T-cell (primary cell): ENCODE measurements at regions of chr4 and their contacts with region 1.

Region 1: DNA sequence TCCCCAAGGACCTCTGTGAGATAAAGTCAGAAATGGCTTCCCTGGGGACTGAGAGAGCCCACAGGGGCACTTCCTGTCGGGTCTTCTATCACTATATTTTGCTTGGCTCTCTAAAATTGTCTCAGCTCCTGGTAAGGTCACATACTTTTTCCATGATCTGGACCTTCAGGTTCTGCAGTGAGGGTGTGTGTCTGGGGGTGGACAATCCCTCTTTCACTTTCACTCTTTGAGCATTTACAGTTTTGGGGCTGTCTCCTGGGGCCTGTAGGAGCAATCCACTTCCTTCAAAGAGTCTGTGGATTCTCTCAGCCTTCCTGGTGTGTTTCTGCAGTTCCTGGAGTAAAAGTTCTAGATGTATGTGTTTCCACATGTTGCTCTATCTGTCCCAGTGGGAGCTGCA is 335.7 kb downstream of the FSTL5 start:
- DNase-seq: no peak
- ATAC-seq: no peak
- H3K4me3 ChIP-seq: no peak overlapping the region
- H3K4me3 Mint-ChIP-seq: no peak overlapping the region
- H3K27ac ChIP-seq: no peak overlapping the region
- H3K27ac Mint-ChIP-seq: no peak overlapping the region
- H3K4me1 ChIP-seq: no peaks in the 10 kb centered on the region
- H3K4me1 Mint-ChIP-seq: no peaks in the 10 kb centered on the region
- H3K27me3 ChIP-seq: no peaks in the 10 kb centered on the region
- H3K27me3 Mint-ChIP-seq: no peaks in the 10 kb centered on the region

Region 2: GRCh38 chr4:160403081-160403480 is 1425.0 kb before region 1 on chr4:
- CTCF ChIA-PET with region 1: no interaction called
- POLR2A ChIA-PET with region 1: interaction called in 1 of 2 experiments, 12 read pairs
- DNase-seq: no peak
- ATAC-seq: no peak
- H3K4me3 ChIP-seq: no peak overlapping the region
- H3K4me3 Mint-ChIP-seq: no peak overlapping the region
- H3K27ac ChIP-seq: no peak overlapping the region
- H3K27ac Mint-ChIP-seq: no peak overlapping the region
- H3K4me1 ChIP-seq: no peaks in the 10 kb centered on the region
- H3K4me1 Mint-ChIP-seq: no peaks in the 10 kb centered on the region
- H3K27me3 ChIP-seq: no peaks in the 10 kb centered on the region
- H3K27me3 Mint-ChIP-seq: no peaks in the 10 kb centered on the region